RWPE1 (cell line): ENCODE measurements at regions of chr5 and their contacts with region 1.

Region 1: DNA sequence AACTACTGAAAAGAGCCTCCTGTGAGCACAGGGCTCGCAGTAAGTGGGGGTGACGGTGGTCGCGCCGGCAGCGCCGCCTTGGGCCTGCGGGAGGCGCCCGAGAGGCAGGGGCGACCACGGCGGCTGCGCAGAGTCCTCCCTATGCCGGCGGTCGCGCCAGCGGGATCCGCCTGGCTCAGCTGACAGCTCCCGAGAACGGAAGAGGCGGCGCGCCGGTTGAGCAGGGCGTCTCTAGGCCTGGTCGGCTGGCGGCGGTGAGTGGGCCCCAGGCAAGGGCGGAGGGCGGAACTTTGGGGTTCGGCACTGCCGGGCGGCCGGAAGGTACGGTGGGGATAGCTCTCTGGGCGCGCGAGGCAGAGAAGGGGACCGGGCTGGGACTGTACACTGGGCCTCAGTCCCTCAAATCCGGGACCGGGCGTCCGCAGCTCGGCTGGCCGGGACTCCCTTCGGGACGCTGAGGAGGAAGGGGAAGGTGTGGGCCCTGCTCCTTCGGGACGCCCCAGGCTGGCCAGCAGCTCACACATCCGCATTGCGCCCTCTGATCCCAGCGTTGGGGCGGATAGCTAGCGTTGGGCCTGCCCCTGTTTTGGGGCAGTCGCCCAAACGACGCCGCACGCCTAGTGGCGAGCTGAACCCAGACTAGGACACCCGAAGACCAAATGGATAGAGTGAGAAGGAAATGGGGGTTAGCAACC is at the start of gene RNF14:
- DNase-seq: peak; percentile 96
- H3K27ac ChIP-seq: peak within 1 kb of the TSS; percentile 96
- CTCF ChIP-seq: peak; percentile 99

Region 2: DNA sequence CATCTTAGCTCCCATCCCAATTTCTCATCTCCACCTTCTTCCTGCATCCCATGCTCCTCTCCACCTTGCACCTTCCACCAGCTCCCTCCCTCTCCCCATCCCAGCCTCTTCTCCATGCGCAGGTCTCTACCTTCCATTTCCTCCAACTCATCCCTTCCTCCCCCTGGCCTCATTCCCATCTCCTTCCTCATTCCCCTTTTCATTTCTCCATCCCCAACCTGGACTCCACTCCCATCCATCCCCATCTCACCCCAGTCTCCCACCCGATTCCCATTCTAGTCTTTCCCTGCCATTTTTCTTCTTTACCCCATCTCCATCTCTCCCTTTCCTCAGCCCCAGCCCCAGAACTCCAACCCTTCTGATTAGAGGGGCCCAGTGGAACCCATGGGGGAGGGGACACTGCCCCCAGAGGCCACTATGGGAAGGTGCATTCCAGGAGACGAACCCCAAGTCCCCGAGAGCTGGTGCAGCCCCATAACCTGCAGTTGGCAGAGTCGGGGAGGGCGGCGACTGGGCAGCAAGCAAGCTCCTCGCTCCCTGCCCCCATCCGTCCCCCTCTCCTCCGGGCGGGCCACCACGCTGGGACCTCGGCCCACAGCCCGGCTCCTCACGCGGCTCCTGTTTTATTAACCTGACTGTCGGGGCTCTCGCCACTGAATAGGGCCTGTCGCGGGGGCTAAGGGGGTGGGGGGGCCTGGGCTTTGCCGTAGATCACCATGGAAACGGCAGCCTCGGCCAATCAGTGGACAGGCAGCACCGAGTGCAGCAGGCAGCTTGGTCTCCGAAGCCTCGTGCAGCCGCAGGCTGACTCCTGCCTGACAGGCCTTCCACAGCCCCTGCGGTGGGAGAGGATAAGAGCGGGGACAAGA is 157.5 kb before region 1 on chr5:
- CTCF ChIA-PET with region 1: no interaction called
- POLR2A ChIA-PET with region 1: no interaction called
- DNase-seq: peak; percentile 76
- H3K27ac ChIP-seq: no peak overlapping the region
- CTCF ChIP-seq: peak; percentile 80

Region 3: GRCh38 chr5:141923448-141924352 is 45.4 kb before region 1 on chr5 and contains the start of gene DELE1:
- CTCF ChIA-PET with region 1: no interaction called
- POLR2A ChIA-PET with region 1: interaction called, 11 read pairs
- DNase-seq: peak; percentile 99
- H3K27ac ChIP-seq: peak within 1 kb of the TSS; percentile 94
- CTCF ChIP-seq: no peak

Region 4: GRCh38 chr5:142807372-142807911 is 838.4 kb after region 1 on chr5:
- CTCF ChIA-PET with region 1: no interaction called
- POLR2A ChIA-PET with region 1: no interaction called
- DNase-seq: no peak
- H3K27ac ChIP-seq: no peak overlapping the region
- CTCF ChIP-seq: no peak

Region 5: GRCh38 chr5:143271431-143271830 is 1302.4 kb after region 1 on chr5:
- CTCF ChIA-PET with region 1: no interaction called
- POLR2A ChIA-PET with region 1: no interaction called
- DNase-seq: no peak
- H3K27ac ChIP-seq: no peak overlapping the region
- CTCF ChIP-seq: no peak